Dendritic cell treated with granulocyte-macrophage colony-stimulating factor and Interleukin-4, amounts not matched to agents 40 ng/mL and 50 ng/mL, for 4 days (primary cell): ENCODE measurements at regions of chr4 and their contacts with region 1.

Region 1: GRCh38 chr4:150366487-150366999 is 215.4 kb upstream of the MAB21L2 start:
- H3K4me3 Mint-ChIP-seq: no peak overlapping the region
- H3K27ac Mint-ChIP-seq: no peak overlapping the region
- H3K4me1 Mint-ChIP-seq: peaks cover 6% of the 10 kb centered on the region
- H3K27me3 Mint-ChIP-seq: no peaks in the 10 kb centered on the region

Region 2: DNA sequence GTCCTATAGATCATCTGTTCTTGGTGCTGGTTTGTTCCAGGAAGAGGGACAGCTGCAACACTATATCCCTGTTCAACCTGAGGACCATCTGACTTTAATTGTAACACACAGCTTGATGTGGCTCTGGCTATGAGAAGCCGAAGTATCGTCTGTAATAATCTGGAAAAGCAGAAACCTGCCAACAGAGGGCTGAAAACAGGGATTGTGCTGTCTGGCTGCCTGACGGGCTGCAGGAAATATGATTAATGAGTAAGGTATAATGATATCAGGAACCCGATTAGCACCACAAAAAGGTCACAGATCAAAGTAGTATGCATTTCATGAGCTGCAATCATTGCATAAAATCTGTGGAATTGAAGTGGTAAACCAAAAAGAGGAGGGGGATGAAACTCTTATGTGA is 45.0 kb after region 1 on chr4:
- intact Hi-C with region 1: no loop called
- H3K4me3 Mint-ChIP-seq: no peak overlapping the region
- H3K27ac Mint-ChIP-seq: no peak overlapping the region
- H3K4me1 Mint-ChIP-seq: no peaks in the 10 kb centered on the region
- H3K27me3 Mint-ChIP-seq: no peaks in the 10 kb centered on the region

Region 3: DNA sequence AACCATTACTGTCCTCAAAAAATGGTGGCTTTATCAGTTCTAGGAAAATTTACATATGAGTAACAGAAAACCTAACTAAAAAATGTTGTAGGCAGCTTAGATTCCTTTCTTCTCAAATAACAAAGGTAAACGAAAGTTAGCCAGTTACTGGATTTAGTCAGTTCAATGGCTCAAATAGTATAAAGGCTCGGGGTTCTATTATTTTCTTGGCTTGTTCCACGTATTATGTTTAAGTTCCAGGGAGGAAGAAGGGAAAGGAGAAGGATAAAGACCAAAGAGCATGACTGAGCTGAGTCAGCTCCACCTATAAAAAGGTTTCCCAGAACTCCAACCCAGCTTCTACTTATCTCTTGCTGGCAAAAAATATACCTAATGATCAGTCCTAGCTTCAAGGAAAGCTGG is 174.4 kb after region 1 on chr4:
- intact Hi-C with region 1: loop called (anchors 10 kb)
- H3K4me3 Mint-ChIP-seq: no peak overlapping the region
- H3K27ac Mint-ChIP-seq: no peak overlapping the region
- H3K4me1 Mint-ChIP-seq: no peaks in the 10 kb centered on the region
- H3K27me3 Mint-ChIP-seq: no peaks in the 10 kb centered on the region